ENCODE measurements at regions of chr9 and their contacts with region 1.

Region 1: DNA sequence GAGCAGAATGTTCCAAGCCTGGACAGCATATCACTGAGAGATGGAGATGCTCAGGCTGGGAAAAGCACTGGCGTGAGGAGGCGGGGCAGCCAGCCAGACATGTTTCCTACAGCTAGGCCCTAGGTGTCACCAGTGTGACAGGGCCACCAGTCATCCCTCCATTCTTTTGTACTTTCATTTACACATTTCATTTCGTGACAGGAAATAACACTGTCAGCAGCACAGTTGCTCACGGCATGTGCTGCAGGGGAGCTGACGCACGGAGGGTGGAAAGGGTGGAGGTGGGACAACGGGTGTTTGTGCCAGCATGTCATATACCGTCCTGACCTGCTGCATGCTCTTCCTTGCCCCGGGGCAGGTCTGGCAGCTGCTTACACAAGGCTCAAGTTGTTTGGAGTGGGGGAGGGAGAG is 14.8 kb upstream of the CEMIP2 start:
- DNase-seq: peak; percentile 86 to 95 (median 90)
- H3K4me3 ChIP-seq: no peak overlapping the region
- H3K4me3 Mint-ChIP-seq: peak overlapping the region; percentile 64 to 86 (median 82)
- H3K27ac ChIP-seq: peak overlapping the region; percentile 83
- H3K27ac Mint-ChIP-seq: peak overlapping the region; percentile 93 to 100 (median 99)
- H3K4me1 ChIP-seq: peaks cover 41% of the 10 kb centered on the region
- H3K4me1 Mint-ChIP-seq: peaks cover 36 to 51% (median 40%) of the 10 kb centered on the region in 4 donors
- H3K27me3 ChIP-seq: no peaks in the 10 kb centered on the region
- H3K27me3 Mint-ChIP-seq: no peaks in the 10 kb centered on the region

Region 2: DNA sequence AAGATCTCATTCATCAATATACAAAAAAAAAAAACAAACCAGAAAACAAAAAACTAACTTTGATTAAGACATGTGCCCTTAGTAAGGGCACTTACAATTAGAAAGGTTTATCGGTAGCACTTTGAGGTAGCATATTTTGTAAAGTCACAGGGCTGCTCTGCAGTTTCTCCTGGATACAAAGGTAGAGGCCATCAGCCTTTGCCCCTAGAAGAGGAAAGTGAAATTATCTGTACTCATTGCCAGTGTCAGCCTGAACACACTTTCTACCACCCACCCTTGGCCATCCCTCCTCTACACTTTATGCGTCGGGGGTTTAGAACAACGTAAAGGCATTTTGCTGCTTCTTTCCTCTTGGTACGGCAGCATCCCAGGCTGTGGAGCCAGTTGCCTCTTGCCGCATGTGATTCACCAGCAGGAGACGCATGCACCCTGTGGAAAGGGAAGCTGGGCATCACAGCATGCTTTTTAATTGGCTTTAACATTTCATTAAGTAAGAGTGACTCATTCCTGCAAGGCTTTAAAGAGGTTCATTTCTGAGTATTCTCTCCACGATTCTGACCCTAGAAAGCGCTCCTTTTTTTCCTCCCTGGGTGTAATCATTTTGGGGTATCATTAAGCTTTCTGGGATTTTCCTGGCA is 99.4 kb before region 1 on chr9:
- CTCF ChIA-PET with region 1: interaction called, 3 read pairs
- POLR2A ChIA-PET with region 1: interaction called, 13 read pairs
- intact Hi-C with region 1: no loop called
- DNase-seq: no peak
- H3K4me3 ChIP-seq: no peak overlapping the region
- H3K4me3 Mint-ChIP-seq: peak overlapping the region; percentile 31 to 79 (median 69)
- H3K27ac ChIP-seq: no peak overlapping the region
- H3K27ac Mint-ChIP-seq: peak overlapping the region; percentile 8 to 90 (median 72)
- H3K4me1 ChIP-seq: peaks cover 37% of the 10 kb centered on the region
- H3K4me1 Mint-ChIP-seq: peaks cover 36 to 59% (median 48%) of the 10 kb centered on the region in 4 donors
- H3K27me3 ChIP-seq: no peaks in the 10 kb centered on the region
- H3K27me3 Mint-ChIP-seq: no peaks in the 10 kb centered on the region

Region 3: GRCh38 chr9:71801826-71802225 is 18.7 kb after region 1 on chr9:
- CTCF ChIA-PET with region 1: interaction called, 97 read pairs
- POLR2A ChIA-PET with region 1: interaction called, 144 read pairs
- intact Hi-C with region 1: loop called (anchors 1 kb)
- DNase-seq: no peak
- H3K4me3 ChIP-seq: no peak overlapping the region
- H3K4me3 Mint-ChIP-seq: no peak overlapping the region
- H3K27ac ChIP-seq: no peak overlapping the region
- H3K27ac Mint-ChIP-seq: no peak overlapping the region
- H3K4me1 ChIP-seq: peaks cover 17% of the 10 kb centered on the region
- H3K4me1 Mint-ChIP-seq: peaks cover 8 to 13% (median 11%) of the 10 kb centered on the region in 4 donors
- H3K27me3 ChIP-seq: no peaks in the 10 kb centered on the region
- H3K27me3 Mint-ChIP-seq: no peaks in the 10 kb centered on the region

Region 4: GRCh38 chr9:71812385-71812784 is 29.3 kb after region 1 on chr9:
- CTCF ChIA-PET with region 1: interaction called, 218 read pairs
- POLR2A ChIA-PET with region 1: interaction called, 33 read pairs
- intact Hi-C with region 1: loop called (anchors 1 kb)
- DNase-seq: no peak
- H3K4me3 ChIP-seq: no peak overlapping the region
- H3K4me3 Mint-ChIP-seq: no peak overlapping the region
- H3K27ac ChIP-seq: no peak overlapping the region
- H3K27ac Mint-ChIP-seq: peak overlapping the region in 1 of 7 donors; percentile 62
- H3K4me1 ChIP-seq: no peaks in the 10 kb centered on the region
- H3K4me1 Mint-ChIP-seq: peaks cover 4 to 7% (median 7%) of the 10 kb centered on the region in 4 donors
- H3K27me3 ChIP-seq: no peaks in the 10 kb centered on the region
- H3K27me3 Mint-ChIP-seq: no peaks in the 10 kb centered on the region

Region 5: DNA sequence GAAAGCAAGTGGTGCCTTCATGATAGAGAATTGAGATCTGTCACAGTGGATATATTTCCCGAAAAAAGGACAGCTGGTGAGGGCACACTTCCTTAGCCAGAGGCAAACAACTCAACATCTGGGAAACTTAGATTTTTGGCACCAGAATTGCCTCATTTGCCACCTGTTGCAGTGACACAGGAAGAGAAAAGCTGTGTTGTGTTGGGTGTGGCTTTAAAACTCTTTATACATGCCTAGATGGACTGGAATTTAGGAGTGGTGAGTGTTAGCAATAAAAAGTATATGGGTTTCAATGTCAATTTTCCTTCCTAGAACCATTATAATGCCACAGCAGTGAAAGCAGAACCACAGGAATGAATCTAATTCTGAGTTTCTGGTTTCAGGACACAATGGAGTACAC is 47.8 kb after region 1 on chr9:
- CTCF ChIA-PET with region 1: no interaction called
- POLR2A ChIA-PET with region 1: no interaction called
- intact Hi-C with region 1: no loop called
- DNase-seq: no peak
- H3K4me3 ChIP-seq: no peak overlapping the region
- H3K4me3 Mint-ChIP-seq: no peak overlapping the region
- H3K27ac ChIP-seq: no peak overlapping the region
- H3K27ac Mint-ChIP-seq: no peak overlapping the region
- H3K4me1 ChIP-seq: no peaks in the 10 kb centered on the region
- H3K4me1 Mint-ChIP-seq: no peaks in the 10 kb centered on the region
- H3K27me3 ChIP-seq: no peaks in the 10 kb centered on the region
- H3K27me3 Mint-ChIP-seq: no peaks in the 10 kb centered on the region

Region 6: GRCh38 chr9:72526901-72527800 is 744.0 kb after region 1 on chr9:
- CTCF ChIA-PET with region 1: no interaction called
- POLR2A ChIA-PET with region 1: no interaction called
- intact Hi-C with region 1: loop called (anchors 1 kb)
- DNase-seq: peak; percentile 74 to 93 (median 79)
- H3K4me3 ChIP-seq: peak overlapping the region; percentile 54 to 76
- H3K4me3 Mint-ChIP-seq: peak overlapping the region; percentile 81 to 94 (median 86)
- H3K27ac ChIP-seq: peak overlapping the region; percentile 68
- H3K27ac Mint-ChIP-seq: peak overlapping the region; percentile 92 to 98 (median 96)
- H3K4me1 ChIP-seq: peaks cover 27% of the 10 kb centered on the region
- H3K4me1 Mint-ChIP-seq: peaks cover 22 to 46% (median 34%) of the 10 kb centered on the region in 4 donors
- H3K27me3 ChIP-seq: no peaks in the 10 kb centered on the region
- H3K27me3 Mint-ChIP-seq: no peaks in the 10 kb centered on the region